Heart right ventricle (tissue), 16 donors: ENCODE measurements at regions of chr12 and their contacts with region 1.

Region 1: GRCh38 chr12:120833849-120834248 is 70.3 kb downstream of the SPPL3 start:
- DNase-seq: no peak
- ATAC-seq: peak in 6 of 8 donors; percentile 39 to 62 (median 54)
- H3K4me3 ChIP-seq: no peak overlapping the region
- H3K27ac ChIP-seq: peak overlapping the region in 4 of 10 donors; percentile 24 to 38 (median 30)
- H3K4me1 ChIP-seq: peaks cover 16 to 83% (median 65%) of the 10 kb centered on the region in 9 donors
- H3K27me3 ChIP-seq: no peaks in the 10 kb centered on the region
- CTCF ChIP-seq: no peak

Region 2: GRCh38 chr12:120775862-120776552 is 57.8 kb before region 1 on chr12:
- intact Hi-C with region 1: loop called in 1 of 10 experiments (anchors 5 kb)
- DNase-seq: no peak
- ATAC-seq: peak in 1 of 8 donors; percentile 47
- H3K4me3 ChIP-seq: no peak overlapping the region
- H3K27ac ChIP-seq: peak overlapping the region in 4 of 10 donors; percentile 3 to 38 (median 14)
- H3K4me1 ChIP-seq: peaks cover 4 to 37% (median 20%) of the 10 kb centered on the region in 9 donors
- H3K27me3 ChIP-seq: no peaks in the 10 kb centered on the region
- CTCF ChIP-seq: no peak

Region 3: GRCh38 chr12:120892265-120892664 is 58.4 kb after region 1 on chr12:
- intact Hi-C with region 1: no loop called
- DNase-seq: no peak
- ATAC-seq: peak in 4 of 8 donors; percentile 32 to 54 (median 36)
- H3K4me3 ChIP-seq: no peak overlapping the region
- H3K27ac ChIP-seq: peak overlapping the region in 7 of 10 donors; percentile 5 to 67 (median 34)
- H3K4me1 ChIP-seq: peaks cover 0 to 60% (median 39%) of the 10 kb centered on the region in 9 donors
- H3K27me3 ChIP-seq: no peaks in the 10 kb centered on the region
- CTCF ChIP-seq: no peak